ENCODE measurements at regions of chr19 and their contacts with region 1.

Region 1: DNA sequence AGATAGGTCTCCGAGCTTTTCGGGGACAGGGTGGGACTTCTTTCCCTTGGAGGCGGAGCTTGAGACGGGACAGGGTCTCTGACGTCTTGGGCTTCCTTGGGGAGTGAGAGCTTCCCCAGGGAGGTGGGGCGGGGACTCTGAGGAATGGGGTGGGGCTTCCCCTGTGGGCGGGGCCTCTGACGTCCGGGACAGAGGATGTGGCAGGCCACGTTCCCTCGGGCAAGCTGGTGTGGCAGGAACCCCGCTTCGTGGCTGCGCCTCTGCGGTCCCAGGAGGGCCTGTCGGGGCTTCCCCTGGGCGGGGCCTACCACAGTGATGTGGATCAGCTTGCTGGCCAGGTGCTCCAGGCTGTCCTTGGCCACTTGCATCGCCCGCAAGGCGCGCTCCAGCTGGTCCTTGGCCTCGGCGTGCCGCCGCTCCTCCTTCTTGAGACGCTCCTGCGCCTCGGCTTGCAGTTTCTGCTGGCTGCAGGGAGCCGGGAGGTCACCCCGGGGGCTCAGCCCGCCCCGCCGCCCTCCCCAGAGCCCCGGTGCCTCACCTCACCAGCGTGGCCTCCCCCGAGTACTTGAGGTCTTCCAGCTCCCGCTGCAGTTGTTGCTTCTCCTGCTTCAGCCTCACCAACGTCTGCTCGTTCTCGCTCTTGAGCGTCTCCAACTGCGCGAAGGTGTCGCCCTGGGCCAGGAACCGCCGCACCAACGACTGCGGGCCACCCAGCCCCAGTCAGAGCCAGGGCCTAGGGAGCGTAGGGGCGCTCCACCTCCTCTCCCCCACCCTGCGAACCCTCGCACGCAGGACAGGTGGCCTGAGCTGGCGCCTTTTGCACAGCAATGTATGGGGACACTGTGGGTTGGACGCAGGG is 3.3 kb upstream of the RGL3 start:
- DNase-seq: peak; percentile 91
- H3K4me3 ChIP-seq: no peak overlapping the region
- H3K27ac ChIP-seq: no peak overlapping the region
- H3K4me1 ChIP-seq: peaks cover 14% of the 10 kb centered on the region
- H3K27me3 ChIP-seq: peaks cover 2% of the 10 kb centered on the region
- CTCF ChIP-seq: no peak

Region 2: GRCh38 chr19:11435058-11435832 is 12.9 kb after region 1 on chr19 and contains the starts of genes ODAD3 and PRKCSH:
- CTCF ChIA-PET with region 1: no interaction called
- dilution Hi-C with region 1: no loop called
- in situ Hi-C with region 1: no loop called
- intact Hi-C with region 1: loop called (anchors 1 kb)
- DNase-seq: peak; percentile 100
- H3K4me3 ChIP-seq: peak within 1 kb of the TSS; percentile 49 to 87 (median 71)
- H3K27ac ChIP-seq: peak within 1 kb of the TSS; percentile 60
- H3K4me1 ChIP-seq: peaks cover 12% of the 10 kb centered on the region
- H3K27me3 ChIP-seq: no peaks in the 10 kb centered on the region
- CTCF ChIP-seq: peak; percentile 82 to 85
- total RNA-seq, gene ODAD3: 0.17 to 1.1 TPM
- total RNA-seq, gene PRKCSH: 118 to 290 TPM

Measured in mammary epithelial cell (primary cell).